MCF 10A (cell line): ENCODE measurements at regions of chr15 and their contacts with region 1.

Region 1: DNA sequence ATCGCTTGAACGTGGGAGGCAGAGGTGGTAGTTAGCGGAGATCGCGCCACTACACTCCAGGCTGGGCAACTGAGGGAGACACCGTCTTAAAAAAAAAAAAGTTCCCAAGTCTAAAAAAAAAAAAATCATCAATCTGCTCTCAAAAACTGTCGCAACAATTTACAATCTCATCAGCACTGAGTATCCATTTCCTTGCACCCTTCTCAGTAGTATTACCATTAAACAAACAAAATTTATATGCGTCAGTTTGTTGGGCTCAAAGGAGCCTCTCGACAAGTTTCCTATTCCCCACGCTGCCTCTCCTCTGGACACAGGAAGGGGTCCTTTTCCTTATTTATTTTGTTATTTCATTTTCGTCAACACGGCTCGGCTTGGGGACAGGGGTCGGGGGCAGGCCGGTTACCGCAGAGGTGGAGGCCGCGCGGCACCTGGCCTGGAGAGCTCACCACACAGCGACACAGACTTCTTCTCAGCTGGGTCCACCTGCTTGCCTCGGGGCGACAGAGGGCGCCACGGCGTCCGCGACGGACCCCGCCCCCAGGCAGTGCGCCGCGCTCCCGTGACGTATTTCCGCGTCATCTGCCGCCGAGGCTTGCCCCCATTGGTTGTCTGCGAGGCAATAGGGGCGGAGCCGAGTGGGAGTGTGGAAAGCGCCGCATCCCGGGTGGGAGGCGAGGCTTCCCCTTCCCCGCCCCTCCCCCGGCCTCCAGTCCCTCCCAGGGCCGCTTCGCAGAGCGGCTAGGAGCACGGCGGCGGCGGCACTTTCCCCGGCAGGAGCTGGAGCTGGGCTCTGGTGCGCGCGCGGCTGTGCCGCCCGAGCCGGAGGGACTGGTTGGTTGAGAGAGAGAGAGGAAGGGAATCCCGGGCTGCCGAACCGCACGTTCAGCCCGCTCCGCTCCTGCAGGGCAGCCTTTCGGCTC is at the start of gene MAP2K1:
- DNase-seq: peak; percentile 97
- H3K4me3 Mint-ChIP-seq: peak within 1 kb of the TSS; percentile 100
- H3K27ac Mint-ChIP-seq: peak within 1 kb of the TSS; percentile 98
- H3K4me1 Mint-ChIP-seq: peaks cover 32% of the 10 kb centered on the region
- H3K27me3 Mint-ChIP-seq: no peaks in the 10 kb centered on the region
- CTCF ChIP-seq: peak; percentile 43
- total RNA-seq, gene MAP2K1: 108 and 115 TPM in 2 replicates

Region 2: DNA sequence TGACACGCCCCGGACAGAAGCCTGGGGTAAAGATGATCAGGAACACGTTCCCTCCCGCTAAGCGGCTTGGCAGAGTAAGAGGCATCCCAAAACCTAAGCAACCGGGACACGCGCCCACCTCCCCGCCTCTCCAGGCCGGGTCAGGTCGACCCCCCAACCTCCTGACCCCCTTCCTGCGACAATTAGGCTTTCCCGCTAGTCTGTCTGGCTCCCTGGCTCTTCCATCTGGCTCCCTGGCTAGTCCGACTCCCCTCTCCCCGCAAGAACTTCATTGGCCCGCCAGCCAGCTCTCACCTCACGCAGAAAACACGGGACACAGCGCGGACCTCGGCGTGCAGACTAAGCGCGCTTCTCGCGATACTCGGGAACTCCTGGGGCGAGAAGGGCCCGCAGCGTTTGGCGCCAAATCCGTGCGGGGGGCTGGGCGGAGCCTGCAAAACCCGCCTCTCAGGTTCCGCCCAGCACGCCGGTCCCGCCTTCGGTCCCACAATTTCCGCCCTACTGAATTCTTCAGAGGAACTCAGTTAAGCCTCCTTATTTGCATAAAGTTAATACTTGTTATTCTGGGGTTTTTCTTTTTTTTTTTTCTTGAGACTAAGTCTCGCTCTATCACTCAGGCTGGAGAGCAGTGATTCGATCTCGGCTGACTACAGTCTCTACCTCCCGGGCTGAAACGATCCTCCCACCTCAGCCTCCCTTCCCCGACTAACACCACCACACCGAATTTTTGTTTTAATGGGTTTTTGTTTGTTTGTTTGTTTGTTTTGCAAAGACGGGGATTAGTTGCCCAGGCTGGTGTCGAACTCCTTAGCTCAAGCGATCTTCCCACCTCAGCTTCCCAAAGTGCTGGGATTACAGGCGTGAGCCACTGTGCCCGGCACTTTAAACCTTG is 29.9 kb before region 1 on chr15 and contains the start of gene TIPIN:
- CTCF ChIA-PET with region 1: no interaction called
- POLR2A ChIA-PET with region 1: interaction called, 14 read pairs
- intact Hi-C with region 1: no loop called
- DNase-seq: peak; percentile 95
- H3K4me3 Mint-ChIP-seq: peak within 1 kb of the TSS; percentile 99
- H3K27ac Mint-ChIP-seq: peak within 1 kb of the TSS; percentile 99
- H3K4me1 Mint-ChIP-seq: peaks cover 5% of the 10 kb centered on the region
- H3K27me3 Mint-ChIP-seq: no peaks in the 10 kb centered on the region
- CTCF ChIP-seq: no peak
- total RNA-seq, gene TIPIN: 16.1 and 17.1 TPM in 2 replicates

Region 3: DNA sequence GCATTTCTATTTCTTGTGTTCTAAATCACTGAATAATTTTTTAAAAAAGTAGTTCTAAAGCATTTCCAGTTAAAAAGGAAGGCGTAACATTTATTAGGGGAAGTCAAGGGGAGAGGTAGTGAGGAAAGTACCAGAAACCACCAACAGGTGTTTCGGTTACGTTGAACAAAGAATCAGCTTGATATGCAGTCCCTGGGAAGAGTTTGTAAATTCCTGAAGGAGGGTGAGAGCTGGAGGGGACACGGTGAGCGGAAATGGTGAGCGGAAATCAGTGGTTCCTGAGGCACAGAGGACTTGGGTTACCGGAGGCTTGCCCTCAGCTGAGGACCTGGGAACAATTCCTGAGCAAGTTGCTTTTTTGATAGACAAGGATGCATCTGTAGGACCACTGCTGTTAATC is 18.1 kb after region 1 on chr15:
- CTCF ChIA-PET with region 1: interaction called, 3 read pairs
- POLR2A ChIA-PET with region 1: interaction called, 12 read pairs
- intact Hi-C with region 1: no loop called
- DNase-seq: no peak
- H3K4me3 Mint-ChIP-seq: no peak overlapping the region
- H3K27ac Mint-ChIP-seq: no peak overlapping the region
- H3K4me1 Mint-ChIP-seq: peaks cover 46% of the 10 kb centered on the region
- H3K27me3 Mint-ChIP-seq: no peaks in the 10 kb centered on the region
- CTCF ChIP-seq: no peak

Region 4: GRCh38 chr15:66497502-66498455 is 111.3 kb after region 1 on chr15 and contains the start of gene SNAPC5:
- CTCF ChIA-PET with region 1: interaction called, 50 read pairs
- POLR2A ChIA-PET with region 1: interaction called, 158 read pairs
- intact Hi-C with region 1: loop called (anchors 1 kb)
- DNase-seq: peak; percentile 95
- H3K4me3 Mint-ChIP-seq: peak within 1 kb of the TSS; percentile 90
- H3K27ac Mint-ChIP-seq: peak within 1 kb of the TSS; percentile 87
- H3K4me1 Mint-ChIP-seq: peaks cover 13% of the 10 kb centered on the region
- H3K27me3 Mint-ChIP-seq: no peaks in the 10 kb centered on the region
- CTCF ChIP-seq: peak; percentile 92
- total RNA-seq, gene SNAPC5: 22.9 and 24.6 TPM in 2 replicates